Right ventricle myocardium inferior (tissue), 1 donor: ENCODE measurements at regions of chr1 and their contacts with region 1.

Region 1: DNA sequence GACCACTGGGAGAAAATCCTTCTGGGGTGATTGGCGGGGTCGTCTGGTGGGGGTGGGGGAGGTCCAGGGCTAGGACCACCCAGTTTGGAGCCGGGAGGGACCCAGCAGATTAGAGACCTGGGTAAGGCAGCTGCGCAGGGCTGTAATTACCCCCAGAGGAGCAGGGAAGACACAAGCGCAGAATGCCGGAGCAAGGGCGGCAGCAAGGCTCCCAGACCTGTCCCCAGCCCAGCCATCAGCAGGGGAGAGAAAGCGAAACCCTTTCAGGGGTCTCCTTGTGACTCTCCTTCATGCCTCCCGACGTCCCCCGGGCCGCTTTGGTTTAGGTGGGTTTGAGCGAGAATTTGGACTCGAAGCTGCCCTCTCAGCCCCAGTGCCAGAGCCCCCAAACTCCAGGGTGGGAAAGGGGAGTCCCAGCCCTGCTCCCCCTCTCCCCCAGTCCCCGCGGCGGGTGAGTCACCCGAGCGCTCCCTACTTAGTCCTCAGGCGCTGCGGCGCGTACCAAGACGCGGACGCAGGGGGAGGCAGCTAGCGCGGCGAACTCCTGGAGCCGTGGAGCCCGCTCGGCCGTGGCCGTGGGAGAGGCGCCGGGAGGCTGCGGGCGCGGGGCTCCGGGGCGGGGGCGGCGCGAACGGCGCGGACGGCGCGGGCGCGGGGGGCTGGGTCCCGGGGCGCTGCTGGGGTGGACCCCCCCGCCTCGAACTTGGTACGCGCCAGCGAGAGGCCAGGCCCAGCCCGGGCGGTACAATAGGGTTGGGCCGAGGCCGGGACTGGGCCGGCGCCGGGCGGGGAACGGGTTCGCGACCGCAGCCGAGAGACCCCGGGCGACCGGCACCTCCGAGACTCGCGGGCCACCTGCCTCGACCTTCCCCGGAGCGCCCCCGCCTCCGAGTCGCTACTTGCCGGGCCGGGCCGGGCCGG is at the start of gene MAP7D1:
- DNase-seq: peak; percentile 95
- ATAC-seq: peak; percentile 72
- total RNA-seq, gene MAP7D1: 383 TPM

Region 2: DNA sequence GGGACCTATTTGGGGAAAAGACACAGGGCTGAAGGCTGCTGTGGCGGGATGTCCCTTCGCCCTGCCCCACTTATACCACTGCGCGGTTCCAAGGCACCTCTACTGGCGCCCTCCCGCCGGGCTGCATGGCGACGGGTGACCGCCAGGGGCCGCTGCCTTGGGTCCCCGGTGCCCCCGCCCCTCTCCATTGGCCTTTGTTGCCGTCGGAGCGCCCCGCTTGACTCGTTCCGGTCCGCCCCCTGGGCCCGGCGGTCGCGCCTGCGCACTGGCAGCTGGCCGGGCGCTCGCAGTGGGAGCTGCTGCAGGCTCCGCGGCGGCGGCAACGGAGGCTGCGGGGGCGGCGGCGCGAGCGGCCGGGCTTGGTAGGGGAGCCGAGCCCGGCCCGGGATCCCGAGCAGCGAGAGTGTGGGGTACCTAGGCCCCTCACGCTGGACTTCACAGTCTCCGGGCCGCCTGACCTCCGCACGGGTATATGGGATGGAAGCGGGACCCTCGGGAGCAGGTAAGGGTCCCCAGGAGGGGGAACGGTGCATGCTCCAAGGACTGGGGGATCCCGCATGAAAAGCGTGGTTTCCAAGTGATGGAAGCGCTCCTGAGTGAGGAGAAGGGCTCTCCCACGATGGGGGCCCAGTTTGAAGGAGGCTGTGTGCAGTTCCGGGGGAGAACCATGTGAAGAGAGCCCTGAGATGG is 272.6 kb before region 1 on chr1 and contains the start of gene AGO1:
- intact Hi-C with region 1: no loop called
- DNase-seq: peak; percentile 97
- ATAC-seq: peak; percentile 98
- total RNA-seq, gene AGO1: 17.5 TPM

Region 3: GRCh38 chr1:36175137-36176095 is 19.7 kb after region 1 on chr1:
- intact Hi-C with region 1: loop called (anchors 2 kb)
- DNase-seq: peak; percentile 71
- ATAC-seq: peak; percentile 83